Activated CD8-positive, alpha-beta T cell treated with anti-CD3 and anti-CD28 coated beads, Interleukin-2, amount 10 ng/mL, durations not matched to agents 7 days and 5 days (primary cell): ENCODE measurements at regions of chr19 and their contacts with region 1.

Region 1: DNA sequence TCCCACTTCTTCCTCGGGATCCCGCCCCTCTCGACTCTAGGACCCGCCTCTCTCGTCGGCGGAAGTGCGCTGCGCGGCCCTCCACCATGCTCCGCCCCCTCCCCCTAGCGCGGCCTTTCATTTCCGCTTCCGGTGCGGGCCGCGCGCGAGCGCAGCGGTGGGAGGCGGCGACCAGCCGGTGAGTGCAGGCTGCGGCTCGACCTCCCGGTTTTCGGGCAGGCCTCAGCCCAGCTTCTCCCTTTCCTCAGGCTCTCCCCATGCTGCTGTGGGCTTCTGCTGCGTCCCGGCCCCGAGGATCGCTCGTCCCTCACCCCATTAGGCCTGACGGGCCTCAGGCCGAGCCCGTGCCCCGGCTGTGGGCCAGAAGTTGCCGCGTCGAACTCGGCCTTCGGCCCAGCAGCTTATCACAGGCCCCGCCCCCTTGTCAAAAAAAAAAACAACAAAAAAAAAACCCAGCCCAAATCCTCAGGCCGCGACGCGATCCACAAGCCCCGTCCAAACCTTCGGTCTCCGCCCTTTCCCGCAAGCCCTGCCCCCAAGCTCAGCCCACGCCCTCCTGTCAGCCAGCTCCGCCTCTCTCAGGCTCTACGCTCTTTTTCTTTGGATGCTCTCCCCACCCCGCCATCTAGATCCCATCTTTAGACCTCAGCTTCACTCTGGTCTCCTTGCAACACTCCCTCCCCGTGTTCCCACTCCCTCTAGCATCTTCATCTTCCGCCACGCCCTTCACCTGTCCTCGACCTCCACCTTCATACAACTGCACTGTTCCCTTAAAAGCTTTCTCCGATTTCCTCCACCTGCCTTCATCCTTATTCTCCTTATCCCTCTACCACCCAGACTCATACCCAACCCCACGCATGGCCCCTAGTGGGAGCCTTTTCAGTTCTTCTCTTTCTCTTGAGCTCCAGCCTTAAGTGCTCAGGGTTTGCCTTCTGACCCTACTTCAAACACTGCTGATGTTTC is at the start of gene CLASRP:
- DNase-seq: peak; percentile 92
- ATAC-seq: peak; percentile 94
- H3K4me3 Mint-ChIP-seq: peak within 1 kb of the TSS; percentile 90
- H3K27ac Mint-ChIP-seq: peak within 1 kb of the TSS; percentile 94
- H3K4me1 Mint-ChIP-seq: peaks cover 28% of the 10 kb centered on the region
- H3K27me3 Mint-ChIP-seq: no peaks in the 10 kb centered on the region
- total RNA-seq, gene CLASRP: 82.5 to 94.5 TPM

Region 2: GRCh38 chr19:45001087-45001739 is 38.0 kb before region 1 on chr19 and contains the start of gene RELB:
- CTCF ChIA-PET with region 1: no interaction called
- POLR2A ChIA-PET with region 1: interaction called, 26 read pairs
- DNase-seq: peak; percentile 92
- ATAC-seq: peak; percentile 78
- H3K4me3 Mint-ChIP-seq: peak within 1 kb of the TSS; percentile 92
- H3K27ac Mint-ChIP-seq: peak within 1 kb of the TSS; percentile 99
- H3K4me1 Mint-ChIP-seq: peaks cover 15% of the 10 kb centered on the region
- H3K27me3 Mint-ChIP-seq: no peaks in the 10 kb centered on the region
- total RNA-seq, gene RELB: 8.7 to 10.2 TPM

Region 3: DNA sequence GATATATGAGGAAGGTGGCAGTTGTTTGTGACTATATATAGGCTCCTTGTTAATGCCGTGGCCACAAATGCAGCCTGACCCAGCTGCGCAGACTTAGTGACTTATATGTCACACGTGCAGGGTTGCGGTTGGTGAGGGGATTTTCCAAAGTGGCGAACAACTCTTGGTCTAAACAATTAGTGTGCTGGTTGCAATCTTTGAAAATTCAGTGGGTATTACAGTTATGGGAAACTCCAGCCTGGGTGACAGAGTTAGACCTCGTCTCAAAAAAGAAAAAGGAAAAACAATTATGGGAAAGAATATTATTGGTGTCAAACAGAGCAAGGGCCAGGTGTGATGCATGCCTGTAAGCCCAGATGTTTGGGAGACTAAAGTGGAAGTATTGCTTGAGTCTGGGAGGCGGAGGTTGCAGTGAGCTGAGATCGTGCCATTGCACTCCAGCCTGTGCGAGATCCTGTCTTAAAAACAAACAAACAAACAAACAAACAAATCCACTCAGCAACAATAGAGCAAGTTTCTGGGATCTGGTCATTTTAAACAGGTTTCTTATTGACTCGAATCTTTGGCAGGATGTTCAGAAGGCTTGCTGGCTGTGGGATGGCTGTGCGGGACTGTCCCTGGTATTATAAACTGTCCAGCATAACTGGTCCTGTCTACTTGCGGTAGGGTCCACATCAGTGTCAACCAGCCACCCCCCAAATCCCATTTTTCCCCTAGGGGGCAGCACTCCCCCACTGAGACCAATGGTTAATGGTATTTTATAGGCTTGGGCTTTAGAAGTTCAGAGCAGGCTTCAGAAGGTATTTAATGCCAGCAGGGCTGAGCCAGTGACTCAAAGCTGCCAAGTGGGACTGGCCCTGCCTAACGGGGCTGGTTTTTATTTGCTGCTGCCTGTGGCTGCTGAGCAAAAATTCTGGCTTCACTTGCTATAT is 22.6 kb before region 1 on chr19:
- CTCF ChIA-PET with region 1: interaction called, 13 read pairs
- POLR2A ChIA-PET with region 1: no interaction called
- DNase-seq: peak; percentile 82
- ATAC-seq: peak; percentile 68
- H3K4me3 Mint-ChIP-seq: peak overlapping the region; percentile 9
- H3K27ac Mint-ChIP-seq: peak overlapping the region; percentile 51
- H3K4me1 Mint-ChIP-seq: peaks cover 8% of the 10 kb centered on the region
- H3K27me3 Mint-ChIP-seq: no peaks in the 10 kb centered on the region

Region 4: GRCh38 chr19:45071969-45072790 is 33.0 kb after region 1 on chr19:
- CTCF ChIA-PET with region 1: no interaction called
- POLR2A ChIA-PET with region 1: no interaction called
- DNase-seq: no peak
- ATAC-seq: no peak
- H3K4me3 Mint-ChIP-seq: no peak overlapping the region
- H3K27ac Mint-ChIP-seq: peak overlapping the region; percentile 49
- H3K4me1 Mint-ChIP-seq: peaks cover 20% of the 10 kb centered on the region
- H3K27me3 Mint-ChIP-seq: no peaks in the 10 kb centered on the region

Region 5: DNA sequence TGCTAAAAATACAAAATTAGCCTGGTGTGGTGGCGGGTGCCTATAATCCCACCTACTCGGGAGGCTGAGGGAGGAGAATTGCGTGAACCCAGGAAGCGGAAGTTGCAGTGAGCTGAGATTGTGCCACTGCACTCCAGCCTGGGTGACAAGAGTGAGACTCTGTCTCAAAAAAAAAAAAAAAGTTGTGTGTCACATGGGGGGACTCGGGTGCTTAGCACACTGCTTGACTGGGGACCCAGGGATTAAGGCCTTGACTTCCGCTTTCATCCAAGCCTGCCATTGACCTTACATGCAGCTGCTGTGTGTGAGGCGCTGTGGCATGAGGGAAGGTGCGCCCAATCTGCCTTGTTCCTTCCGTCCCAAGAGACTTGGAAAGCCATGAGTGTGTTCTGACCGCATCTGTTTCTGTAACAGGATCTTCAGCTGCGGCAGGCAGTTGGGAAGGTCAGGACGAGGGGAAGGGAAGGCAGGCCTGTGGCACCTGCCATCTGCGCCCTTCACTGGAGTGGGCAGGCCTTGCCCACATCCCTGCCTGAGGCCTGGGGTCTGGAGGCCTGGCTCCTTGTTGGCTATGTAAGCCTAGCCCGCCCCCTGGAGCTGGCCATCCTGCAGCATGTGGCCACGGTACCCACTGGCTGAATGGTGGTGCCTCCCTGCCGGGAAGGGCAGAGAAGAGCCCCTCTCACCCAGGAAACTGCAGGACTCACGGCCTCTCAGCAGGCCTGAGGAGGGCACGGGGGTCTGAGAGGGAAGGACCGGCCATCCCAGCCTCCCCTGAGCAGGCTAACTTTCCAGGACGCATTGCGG is 76.8 kb after region 1 on chr19:
- CTCF ChIA-PET with region 1: no interaction called
- POLR2A ChIA-PET with region 1: no interaction called
- DNase-seq: no peak
- ATAC-seq: no peak
- H3K4me3 Mint-ChIP-seq: no peak overlapping the region
- H3K27ac Mint-ChIP-seq: no peak overlapping the region
- H3K4me1 Mint-ChIP-seq: peaks cover 59% of the 10 kb centered on the region
- H3K27me3 Mint-ChIP-seq: no peaks in the 10 kb centered on the region